Heart right ventricle (tissue), 16 donors: ENCODE measurements at regions of chr11 and their contacts with region 1.

Region 1: GRCh38 chr11:33362051-33362910 is 105.1 kb downstream of the HIPK3 start:
- DNase-seq: peak in 1 of 2 donors; percentile 24
- ATAC-seq: peak; percentile 9 to 76 (median 51)
- H3K4me3 ChIP-seq: no peak overlapping the region
- H3K27ac ChIP-seq: no peak overlapping the region
- H3K4me1 ChIP-seq: peaks cover 0 to 12% (median 2%) of the 10 kb centered on the region in 9 donors
- H3K27me3 ChIP-seq: no peaks in the 10 kb centered on the region
- CTCF ChIP-seq: peak; percentile 66 to 80 (median 76)

Region 2: GRCh38 chr11:33542921-33543320 is 180.6 kb after region 1 on chr11:
- intact Hi-C with region 1: loop called in 3 of 10 experiments (anchors 10 kb)
- DNase-seq: peak; percentile 38 to 46
- ATAC-seq: peak in 2 of 8 donors; percentile 38 to 68
- H3K4me3 ChIP-seq: no peak overlapping the region
- H3K27ac ChIP-seq: no peak overlapping the region
- H3K4me1 ChIP-seq: peaks cover 0 to 17% (median 0%) of the 10 kb centered on the region in 9 donors
- H3K27me3 ChIP-seq: no peaks in the 10 kb centered on the region
- CTCF ChIP-seq: peak; percentile 25 to 73 (median 61)

Region 3: DNA sequence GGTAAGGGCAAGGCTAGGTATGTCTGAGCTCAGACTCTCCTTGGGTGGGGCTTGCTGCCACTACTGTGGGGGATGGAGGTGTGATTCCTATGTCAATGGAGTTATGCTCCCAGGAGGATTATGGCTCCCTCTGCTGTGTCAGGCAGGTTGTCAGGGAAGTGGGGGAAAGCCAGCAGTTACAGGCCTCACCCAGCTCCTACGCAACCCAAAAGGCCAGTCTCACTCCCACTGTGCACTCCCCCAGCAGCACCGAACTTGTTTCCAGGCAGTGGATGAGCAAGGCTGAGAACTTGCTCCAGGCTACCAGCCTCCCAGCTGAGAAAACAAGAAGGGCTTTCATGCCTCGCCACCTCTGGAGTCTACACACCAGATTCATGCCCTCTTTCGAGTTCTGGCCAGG is 320.2 kb after region 1 on chr11:
- intact Hi-C with region 1: loop called in 6 of 10 experiments (anchors 2 to 5 kb)
- DNase-seq: no peak
- ATAC-seq: no peak
- H3K4me3 ChIP-seq: no peak overlapping the region
- H3K27ac ChIP-seq: no peak overlapping the region
- H3K4me1 ChIP-seq: no peaks in the 10 kb centered on the region
- H3K27me3 ChIP-seq: peaks cover 0 to 6% (median 0%) of the 10 kb centered on the region in 7 donors
- CTCF ChIP-seq: peak in 1 of 9 donors; percentile 16

Region 4: DNA sequence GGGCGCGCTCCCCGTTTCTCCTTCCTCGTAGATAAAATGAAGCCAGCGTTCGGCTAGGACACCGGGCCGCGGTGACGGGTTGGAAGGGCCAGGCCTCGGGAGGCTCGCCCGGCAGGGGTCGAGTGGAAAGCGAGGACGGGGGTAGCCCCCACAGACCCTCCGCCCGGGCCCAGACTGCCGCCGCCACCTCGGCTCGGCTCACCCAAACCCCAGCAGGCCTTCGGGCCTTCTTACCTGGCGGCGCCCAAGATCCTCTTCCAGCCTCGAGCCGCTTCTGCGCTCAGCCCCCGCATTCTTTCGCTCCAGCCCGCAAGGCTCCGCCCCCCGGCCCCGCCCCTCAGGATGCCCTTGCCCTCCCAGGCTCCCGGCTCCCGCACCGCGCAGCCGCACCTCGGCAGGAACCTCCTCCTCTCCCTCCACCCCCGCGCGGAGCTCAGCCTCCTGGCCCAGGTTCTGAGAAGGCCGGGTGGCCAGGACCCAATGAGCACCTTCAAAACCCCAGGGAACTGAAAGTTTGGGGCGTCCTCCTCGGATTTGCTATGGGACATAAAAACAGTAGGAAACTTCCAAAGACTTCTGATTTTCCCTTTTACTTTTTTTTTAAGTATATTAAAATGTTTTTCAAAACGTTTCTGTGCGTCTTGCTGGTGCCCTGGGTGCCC is 374.0 kb after region 1 on chr11 and contains the start of gene CD59:
- intact Hi-C with region 1: loop called in 6 of 10 experiments (anchors 5 to 10 kb)
- DNase-seq: peak; percentile 98
- ATAC-seq: peak; percentile 96 to 97 (median 96)
- H3K4me3 ChIP-seq: peak within 1 kb of the TSS; percentile 66 to 100 (median 84)
- H3K27ac ChIP-seq: peak within 1 kb of the TSS; percentile 94 to 100 (median 96)
- H3K4me1 ChIP-seq: peaks cover 9 to 52% (median 45%) of the 10 kb centered on the region in 9 donors
- H3K27me3 ChIP-seq: no peaks in the 10 kb centered on the region
- CTCF ChIP-seq: no peak
- total RNA-seq, gene CD59: 676 to 1,261 (median 764) TPM

Region 5: GRCh38 chr11:33747979-33748378 is 385.7 kb after region 1 on chr11:
- intact Hi-C with region 1: loop called in 8 of 10 experiments (anchors 2 to 10 kb)
- DNase-seq: no peak
- ATAC-seq: peak in 2 of 8 donors; percentile 41 to 53
- H3K4me3 ChIP-seq: no peak overlapping the region
- H3K27ac ChIP-seq: peak overlapping the region in 2 of 10 donors; percentile 41 to 57
- H3K4me1 ChIP-seq: peaks cover 0 to 47% (median 6%) of the 10 kb centered on the region in 9 donors
- H3K27me3 ChIP-seq: no peaks in the 10 kb centered on the region
- CTCF ChIP-seq: no peak

Region 6: DNA sequence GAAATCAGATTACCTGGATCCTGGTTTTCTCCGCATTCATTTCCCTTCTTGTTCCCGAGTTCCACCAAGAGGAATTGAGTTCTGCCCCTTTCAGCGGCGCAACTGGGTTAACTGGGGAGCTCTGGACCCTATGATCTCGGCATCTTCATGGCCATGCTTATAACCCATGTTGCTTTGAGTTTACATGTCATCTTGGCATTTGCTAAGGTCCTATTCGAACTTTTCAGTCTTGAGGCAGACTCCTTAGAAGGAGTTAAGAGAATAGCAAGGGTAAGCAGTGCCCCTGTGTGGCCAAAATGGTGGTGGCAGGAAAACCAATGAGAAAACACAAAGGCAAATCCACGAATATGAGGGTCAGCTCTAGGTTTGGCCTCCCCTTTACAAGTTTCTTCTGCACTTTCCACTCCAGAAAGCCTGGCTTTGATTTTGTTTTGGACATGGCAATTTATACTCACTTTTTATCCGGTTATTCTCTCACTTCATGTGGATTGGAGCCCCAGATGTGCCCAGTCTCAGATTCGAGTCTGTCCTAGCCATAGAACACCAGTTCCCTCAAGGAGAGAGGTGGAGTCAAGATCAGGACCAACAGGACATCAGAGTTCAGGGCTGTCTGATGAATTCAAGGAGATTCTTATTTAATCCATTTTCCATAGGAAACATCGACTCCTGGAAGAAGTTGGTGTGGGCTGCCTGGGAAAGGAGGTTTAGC is 467.3 kb after region 1 on chr11:
- intact Hi-C with region 1: loop called in 7 of 10 experiments (anchors 2 to 10 kb)
- DNase-seq: peak; percentile 24 to 57
- ATAC-seq: peak; percentile 76 to 89 (median 85)
- H3K4me3 ChIP-seq: peak overlapping the region; percentile 19 to 61 (median 48)
- H3K27ac ChIP-seq: no peak overlapping the region
- H3K4me1 ChIP-seq: peaks cover 4 to 12% (median 9%) of the 10 kb centered on the region in 9 donors
- H3K27me3 ChIP-seq: peaks cover 0 to 47% (median 32%) of the 10 kb centered on the region in 7 donors
- CTCF ChIP-seq: peak; percentile 61 to 84 (median 76)